Natural killer cell (primary cell): ENCODE measurements at regions of chr7 and their contacts with region 1.

Region 1: GRCh38 chr7:38232502-38233366 is 40.7 kb downstream of the TARP start:
- DNase-seq: peak; percentile 82 to 90
- ATAC-seq: peak; percentile 68 to 89 (median 85)
- H3K4me3 ChIP-seq: no peak overlapping the region
- H3K4me3 Mint-ChIP-seq: peak overlapping the region; percentile 69
- H3K27ac ChIP-seq: peak overlapping the region; percentile 91
- H3K27ac Mint-ChIP-seq: peak overlapping the region; percentile 95 to 96
- H3K4me1 ChIP-seq: peaks cover 78% of the 10 kb centered on the region
- H3K4me1 Mint-ChIP-seq: peaks cover 91 to 97% of the 10 kb centered on the region in 2 donors
- H3K27me3 ChIP-seq: no peaks in the 10 kb centered on the region
- H3K27me3 Mint-ChIP-seq: no peaks in the 10 kb centered on the region
- CTCF ChIP-seq: no peak

Region 2: DNA sequence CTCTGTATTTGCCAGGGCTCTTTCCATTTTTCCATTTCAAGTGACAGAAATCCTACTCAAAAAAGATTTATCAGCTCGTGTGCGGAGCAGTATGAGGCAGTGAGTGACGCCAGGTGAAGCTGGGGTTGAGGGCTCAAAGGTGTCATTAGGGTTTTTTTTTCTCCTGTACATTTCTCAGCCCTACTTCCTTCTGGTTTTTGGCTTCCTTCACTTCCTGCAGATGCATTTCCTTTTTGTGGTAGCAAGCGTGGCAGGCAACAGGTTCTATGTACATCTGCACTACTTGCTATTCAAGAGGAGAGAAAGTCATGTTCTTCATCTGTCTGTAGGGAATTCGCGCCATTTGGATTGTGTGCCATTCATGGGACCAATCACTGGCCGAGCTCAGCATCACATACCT is 1455.7 kb before region 1 on chr7:
- intact Hi-C with region 1: loop called (anchors 5 kb)
- DNase-seq: peak in 1 of 2 donors; percentile 88
- ATAC-seq: peak; percentile 53 to 72 (median 63)
- H3K4me3 ChIP-seq: peak overlapping the region; percentile 21
- H3K4me3 Mint-ChIP-seq: peak overlapping the region; percentile 91
- H3K27ac ChIP-seq: peak overlapping the region; percentile 91
- H3K27ac Mint-ChIP-seq: peak overlapping the region; percentile 94 to 96
- H3K4me1 ChIP-seq: peaks cover 53% of the 10 kb centered on the region
- H3K4me1 Mint-ChIP-seq: peaks cover 76 to 85% of the 10 kb centered on the region in 2 donors
- H3K27me3 ChIP-seq: no peaks in the 10 kb centered on the region
- H3K27me3 Mint-ChIP-seq: no peaks in the 10 kb centered on the region
- CTCF ChIP-seq: no peak

Region 3: DNA sequence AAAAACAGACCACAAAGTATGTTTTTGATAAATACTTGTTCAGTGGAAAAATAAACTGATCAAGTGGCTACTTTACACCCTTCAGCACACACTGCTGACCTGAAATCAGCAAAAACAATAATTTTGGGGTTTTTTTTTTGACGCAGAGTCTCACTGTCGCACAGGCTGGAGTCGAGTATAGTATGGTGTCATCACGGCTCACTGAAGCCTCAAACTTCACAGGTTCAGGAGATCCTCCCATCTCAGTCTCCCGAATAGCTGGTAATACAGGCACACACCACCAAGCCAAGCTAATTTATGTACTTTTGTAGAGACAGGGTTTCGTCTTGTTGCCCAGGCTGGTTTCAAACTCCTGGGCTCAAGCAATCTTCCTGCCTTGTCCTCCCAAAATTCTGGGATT is 10.1 kb after region 1 on chr7:
- intact Hi-C with region 1: loop called (anchors 1 kb)
- DNase-seq: peak in 1 of 2 donors; percentile 68
- ATAC-seq: peak; percentile 61 to 75 (median 62)
- H3K4me3 ChIP-seq: no peak overlapping the region
- H3K4me3 Mint-ChIP-seq: peak overlapping the region; percentile 17
- H3K27ac ChIP-seq: peak overlapping the region; percentile 73
- H3K27ac Mint-ChIP-seq: peak overlapping the region; percentile 93
- H3K4me1 ChIP-seq: peaks cover 28% of the 10 kb centered on the region
- H3K4me1 Mint-ChIP-seq: peaks cover 70 to 73% of the 10 kb centered on the region in 2 donors
- H3K27me3 ChIP-seq: no peaks in the 10 kb centered on the region
- H3K27me3 Mint-ChIP-seq: no peaks in the 10 kb centered on the region
- CTCF ChIP-seq: no peak

Region 4: GRCh38 chr7:38283809-38284208 is 51.1 kb after region 1 on chr7:
- intact Hi-C with region 1: loop called (anchors 2 kb)
- DNase-seq: no peak
- ATAC-seq: no peak
- H3K4me3 ChIP-seq: no peak overlapping the region
- H3K4me3 Mint-ChIP-seq: peak overlapping the region; percentile 77
- H3K27ac ChIP-seq: peak overlapping the region; percentile 55
- H3K27ac Mint-ChIP-seq: peak overlapping the region; percentile 96 to 100
- H3K4me1 ChIP-seq: peaks cover 46% of the 10 kb centered on the region
- H3K4me1 Mint-ChIP-seq: peaks cover 64% of the 10 kb centered on the region in 2 donors
- H3K27me3 ChIP-seq: no peaks in the 10 kb centered on the region
- H3K27me3 Mint-ChIP-seq: no peaks in the 10 kb centered on the region
- CTCF ChIP-seq: no peak

Region 5: GRCh38 chr7:38318803-38319416 is 86.2 kb after region 1 on chr7:
- intact Hi-C with region 1: loop called (anchors 1 kb)
- DNase-seq: peak in 1 of 2 donors; percentile 66
- ATAC-seq: peak; percentile 26 to 56 (median 36)
- H3K4me3 ChIP-seq: peak overlapping the region; percentile 69
- H3K4me3 Mint-ChIP-seq: peak overlapping the region; percentile 97
- H3K27ac ChIP-seq: peak overlapping the region; percentile 97
- H3K27ac Mint-ChIP-seq: peak overlapping the region; percentile 95 to 99
- H3K4me1 ChIP-seq: peaks cover 65% of the 10 kb centered on the region
- H3K4me1 Mint-ChIP-seq: peaks cover 90 to 91% of the 10 kb centered on the region in 2 donors
- H3K27me3 ChIP-seq: no peaks in the 10 kb centered on the region
- H3K27me3 Mint-ChIP-seq: no peaks in the 10 kb centered on the region
- CTCF ChIP-seq: peak; percentile 77